PC-9 (cell line): ENCODE measurements at regions of chr6 and their contacts with region 1.

Region 1: DNA sequence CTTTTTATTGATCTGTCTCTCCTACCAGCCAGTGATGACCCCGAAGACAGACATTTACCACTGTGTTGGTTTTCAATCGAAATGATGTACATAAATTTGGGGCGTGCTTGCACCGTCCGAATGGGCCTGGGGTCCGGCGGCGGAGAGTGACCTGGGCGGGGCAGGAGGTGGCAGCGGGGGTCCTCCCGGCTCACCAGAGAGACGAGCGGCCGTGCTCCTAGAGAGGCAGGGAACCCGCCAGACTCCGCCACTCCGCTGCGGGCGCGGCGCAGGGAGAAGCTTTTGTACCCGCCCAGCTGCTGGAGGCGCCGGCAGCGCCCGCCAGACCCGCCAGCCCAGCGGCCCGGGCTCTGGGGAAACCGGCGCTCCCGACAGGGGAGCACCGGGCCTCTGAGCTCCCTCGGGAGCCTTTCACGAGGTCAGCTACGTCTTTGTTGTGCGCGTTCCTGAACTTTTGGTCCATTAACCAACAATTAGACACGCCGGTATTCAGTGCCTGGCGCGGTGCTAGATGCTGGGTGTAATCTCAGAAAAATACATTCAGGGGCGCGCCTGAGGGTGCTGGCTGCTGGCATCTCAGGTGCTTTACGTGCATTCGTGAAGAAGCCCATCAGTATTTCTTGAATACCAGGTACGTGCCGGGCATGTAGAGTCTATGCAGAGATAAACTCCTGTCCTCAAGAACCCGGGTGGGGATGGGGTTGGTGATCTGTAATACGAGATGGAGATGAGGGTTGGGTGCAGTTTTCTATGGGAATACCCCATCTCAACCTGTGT is at the start of gene PGBD1:
- DNase-seq: peak; percentile 45 to 78
- H3K4me3 ChIP-seq: peak within 1 kb of the TSS; percentile 82
- H3K27ac ChIP-seq: no peak within 1 kb of the TSS
- H3K4me1 ChIP-seq: peaks cover 11% of the 10 kb centered on the region; the same call in 1 of the 2 replicates
- H3K27me3 ChIP-seq: no peaks in the 10 kb centered on the region
- CTCF ChIP-seq: no peak
- total RNA-seq, gene PGBD1: 3.6 and 3.9 TPM in 2 replicates

Region 2: DNA sequence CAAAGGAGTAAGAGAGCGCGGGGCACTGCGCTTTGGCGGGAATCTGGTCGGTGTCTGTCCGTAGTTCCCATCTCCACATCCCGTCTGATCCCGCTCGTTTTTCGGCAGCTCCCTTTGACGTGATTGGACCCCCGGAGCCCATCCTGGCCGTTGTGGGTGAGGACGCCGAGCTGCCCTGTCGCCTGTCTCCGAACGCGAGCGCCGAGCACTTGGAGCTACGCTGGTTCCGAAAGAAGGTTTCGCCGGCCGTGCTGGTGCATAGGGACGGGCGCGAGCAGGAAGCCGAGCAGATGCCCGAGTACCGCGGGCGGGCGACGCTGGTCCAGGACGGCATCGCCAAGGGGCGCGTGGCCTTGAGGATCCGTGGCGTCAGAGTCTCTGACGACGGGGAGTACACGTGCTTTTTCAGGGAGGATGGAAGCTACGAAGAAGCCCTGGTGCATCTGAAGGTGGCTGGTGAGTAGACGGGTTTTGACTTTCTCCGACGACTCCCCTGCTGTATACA is 1779.9 kb before region 1 on chr6:
- CTCF ChIA-PET with region 1: no interaction called
- POLR2A ChIA-PET with region 1: interaction called, 10 read pairs
- intact Hi-C with region 1: no loop called
- DNase-seq: no peak
- H3K4me3 ChIP-seq: no peak overlapping the region
- H3K27ac ChIP-seq: no peak overlapping the region
- H3K4me1 ChIP-seq: no peaks in the 10 kb centered on the region
- H3K27me3 ChIP-seq: no peaks in the 10 kb centered on the region
- CTCF ChIP-seq: no peak

Region 3: GRCh38 chr6:28725890-28726348 is 444.4 kb after region 1 on chr6:
- CTCF ChIA-PET with region 1: no interaction called
- POLR2A ChIA-PET with region 1: interaction called, 10 read pairs
- intact Hi-C with region 1: no loop called
- DNase-seq: no peak
- H3K4me3 ChIP-seq: no peak overlapping the region
- H3K27ac ChIP-seq: no peak overlapping the region
- H3K4me1 ChIP-seq: peaks cover 9% of the 10 kb centered on the region
- H3K27me3 ChIP-seq: no peaks in the 10 kb centered on the region
- CTCF ChIP-seq: no peak